ENCODE measurements at regions of chr11 and their contacts with region 1.

Region 1: DNA sequence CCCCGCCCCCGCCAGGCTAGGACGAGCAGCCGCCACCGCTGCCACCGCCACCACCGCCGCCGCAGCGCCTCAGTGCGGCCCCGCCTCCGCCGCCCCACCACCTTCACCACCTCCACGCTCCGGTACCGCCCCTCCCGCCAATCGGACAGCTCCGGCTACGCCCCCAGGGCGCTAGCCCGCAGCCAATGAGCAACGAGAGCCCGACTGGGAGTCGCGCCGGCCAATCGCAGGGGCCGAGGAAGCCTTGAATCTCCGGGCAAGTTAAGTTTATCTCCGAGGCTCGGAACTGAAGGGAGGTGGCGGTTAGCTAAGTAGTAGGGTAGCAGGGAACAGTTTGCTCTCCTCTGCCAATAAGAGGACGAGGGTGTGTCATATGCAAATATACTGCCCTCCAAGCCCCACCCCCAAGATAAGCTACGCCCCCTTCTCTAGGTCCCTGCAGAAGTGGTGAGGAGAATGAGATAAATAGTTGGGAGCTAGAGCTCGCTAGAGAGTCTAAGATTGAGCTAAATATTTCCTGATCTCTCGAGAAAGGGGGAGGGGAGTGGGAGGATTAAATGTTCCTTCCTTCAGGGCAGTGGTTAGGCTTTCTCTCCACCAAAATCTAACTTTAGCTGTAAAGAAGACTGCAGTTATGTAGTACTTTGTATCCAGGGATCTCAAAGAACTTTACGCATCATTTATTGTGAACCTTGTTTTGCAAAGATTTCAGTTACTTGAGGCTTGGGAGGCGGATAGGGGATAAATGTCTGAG is at the start of gene SESN3:
- DNase-seq: peak; percentile 99
- H3K4me3 Mint-ChIP-seq: no peak within 1 kb of the TSS
- H3K27ac Mint-ChIP-seq: peak within 1 kb of the TSS; percentile 83
- H3K4me1 Mint-ChIP-seq: peaks cover 52% of the 10 kb centered on the region
- H3K27me3 Mint-ChIP-seq: no peaks in the 10 kb centered on the region
- total RNA-seq, gene SESN3: 17.5 to 18.1 TPM

Region 2: DNA sequence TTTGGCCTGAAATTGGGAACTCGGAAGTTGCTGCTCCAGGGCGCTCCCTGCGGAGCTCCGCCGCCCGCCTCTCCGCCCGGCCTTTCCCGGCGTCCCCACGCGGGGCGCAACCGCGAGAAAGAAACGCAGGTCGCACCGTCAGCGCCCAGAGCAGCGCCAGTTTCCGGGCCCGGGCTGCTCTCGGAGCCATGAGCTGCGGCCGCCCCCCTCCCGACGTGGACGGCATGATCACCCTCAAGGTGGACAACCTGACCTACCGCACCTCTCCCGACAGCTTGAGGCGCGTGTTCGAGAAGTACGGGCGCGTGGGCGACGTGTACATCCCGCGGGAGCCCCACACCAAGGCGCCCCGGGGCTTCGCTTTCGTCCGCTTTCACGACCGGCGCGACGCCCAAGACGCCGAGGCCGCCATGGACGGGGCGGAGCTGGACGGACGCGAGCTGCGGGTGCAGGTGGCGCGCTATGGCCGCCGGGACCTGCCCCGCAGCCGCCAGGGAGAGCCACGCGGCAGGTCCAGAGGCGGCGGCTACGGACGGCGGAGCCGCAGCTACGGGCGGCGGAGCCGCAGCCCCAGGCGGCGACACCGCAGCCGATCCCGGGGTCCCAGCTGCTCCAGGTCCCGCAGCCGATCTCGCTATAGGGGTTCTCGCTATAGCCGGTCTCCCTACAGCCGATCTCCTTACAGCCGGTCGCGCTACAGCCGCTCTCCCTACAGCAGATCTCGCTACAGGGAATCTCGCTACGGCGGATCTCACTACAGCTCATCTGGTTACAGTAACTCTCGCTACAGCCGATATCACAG is 164.1 kb before region 1 on chr11:
- CTCF ChIA-PET with region 1: interaction called, 3 read pairs
- intact Hi-C with region 1: loop called (anchors 1 kb)
- DNase-seq: peak; percentile 82
- H3K4me3 Mint-ChIP-seq: peak overlapping the region; percentile 91
- H3K27ac Mint-ChIP-seq: peak overlapping the region; percentile 96
- H3K4me1 Mint-ChIP-seq: peaks cover 23% of the 10 kb centered on the region
- H3K27me3 Mint-ChIP-seq: no peaks in the 10 kb centered on the region

Region 3: GRCh38 chr11:95200781-95201457 is 30.4 kb before region 1 on chr11:
- CTCF ChIA-PET with region 1: interaction called, 3 read pairs
- intact Hi-C with region 1: loop called (anchors 1 kb)
- DNase-seq: no peak
- H3K4me3 Mint-ChIP-seq: no peak overlapping the region
- H3K27ac Mint-ChIP-seq: no peak overlapping the region
- H3K4me1 Mint-ChIP-seq: peaks cover 69% of the 10 kb centered on the region
- H3K27me3 Mint-ChIP-seq: no peaks in the 10 kb centered on the region

Region 4: DNA sequence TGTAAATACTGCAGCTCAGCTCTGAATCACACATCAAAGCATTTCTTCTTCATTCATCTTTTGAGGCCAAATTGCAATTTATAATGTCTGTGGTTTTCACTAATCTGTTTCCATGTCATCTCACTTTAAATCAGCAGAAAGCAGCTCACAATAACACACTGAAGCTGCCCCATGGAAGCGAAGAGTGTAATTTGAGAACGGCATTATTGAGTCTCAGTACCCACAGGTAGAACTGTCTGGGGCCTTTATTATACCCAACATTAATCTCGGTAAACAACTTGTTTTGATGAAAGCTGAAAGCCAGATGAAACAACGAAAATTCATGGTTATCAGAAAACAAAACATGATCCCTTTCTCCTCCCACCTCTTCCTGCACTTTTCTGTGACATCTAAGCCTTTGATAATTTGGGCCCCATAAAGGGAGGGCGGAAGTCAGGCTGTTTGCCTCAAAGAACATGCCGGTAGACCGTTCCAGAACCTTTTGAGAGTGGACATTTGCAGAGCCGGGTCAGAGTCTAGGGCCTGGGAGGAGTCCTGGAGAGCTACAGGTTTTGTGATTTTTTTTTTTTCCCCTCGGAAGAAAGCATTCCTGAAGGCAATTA is 67.9 kb after region 1 on chr11:
- CTCF ChIA-PET with region 1: interaction called, 3 read pairs
- intact Hi-C with region 1: loop called (anchors 1 kb)
- DNase-seq: peak; percentile 24
- H3K4me3 Mint-ChIP-seq: no peak overlapping the region
- H3K27ac Mint-ChIP-seq: peak overlapping the region; percentile 37
- H3K4me1 Mint-ChIP-seq: peaks cover 31% of the 10 kb centered on the region
- H3K27me3 Mint-ChIP-seq: no peaks in the 10 kb centered on the region

Region 5: DNA sequence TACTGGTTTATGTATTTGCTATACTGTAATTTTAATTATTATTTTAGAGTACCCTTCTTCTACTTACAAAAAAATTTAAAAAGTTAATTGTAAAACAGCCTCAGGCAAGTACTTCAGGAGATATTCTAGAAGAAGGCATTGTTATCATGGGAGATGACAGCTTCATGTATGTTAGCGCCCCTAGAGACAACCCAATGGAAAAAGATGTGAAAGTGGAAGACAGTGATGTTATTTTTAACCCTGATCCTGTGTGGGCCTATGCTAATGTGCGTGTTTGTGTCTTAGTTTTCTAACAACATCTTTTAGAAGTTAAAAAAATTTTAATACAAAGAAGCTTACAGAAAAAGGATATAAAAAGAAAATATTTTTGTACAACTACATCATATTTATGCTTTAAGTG is 353.3 kb after region 1 on chr11:
- CTCF ChIA-PET with region 1: no interaction called
- intact Hi-C with region 1: loop called (anchors 5 kb)
- DNase-seq: no peak
- H3K4me3 Mint-ChIP-seq: no peak overlapping the region
- H3K27ac Mint-ChIP-seq: no peak overlapping the region
- H3K4me1 Mint-ChIP-seq: peaks cover 18% of the 10 kb centered on the region
- H3K27me3 Mint-ChIP-seq: no peaks in the 10 kb centered on the region

Region 6: DNA sequence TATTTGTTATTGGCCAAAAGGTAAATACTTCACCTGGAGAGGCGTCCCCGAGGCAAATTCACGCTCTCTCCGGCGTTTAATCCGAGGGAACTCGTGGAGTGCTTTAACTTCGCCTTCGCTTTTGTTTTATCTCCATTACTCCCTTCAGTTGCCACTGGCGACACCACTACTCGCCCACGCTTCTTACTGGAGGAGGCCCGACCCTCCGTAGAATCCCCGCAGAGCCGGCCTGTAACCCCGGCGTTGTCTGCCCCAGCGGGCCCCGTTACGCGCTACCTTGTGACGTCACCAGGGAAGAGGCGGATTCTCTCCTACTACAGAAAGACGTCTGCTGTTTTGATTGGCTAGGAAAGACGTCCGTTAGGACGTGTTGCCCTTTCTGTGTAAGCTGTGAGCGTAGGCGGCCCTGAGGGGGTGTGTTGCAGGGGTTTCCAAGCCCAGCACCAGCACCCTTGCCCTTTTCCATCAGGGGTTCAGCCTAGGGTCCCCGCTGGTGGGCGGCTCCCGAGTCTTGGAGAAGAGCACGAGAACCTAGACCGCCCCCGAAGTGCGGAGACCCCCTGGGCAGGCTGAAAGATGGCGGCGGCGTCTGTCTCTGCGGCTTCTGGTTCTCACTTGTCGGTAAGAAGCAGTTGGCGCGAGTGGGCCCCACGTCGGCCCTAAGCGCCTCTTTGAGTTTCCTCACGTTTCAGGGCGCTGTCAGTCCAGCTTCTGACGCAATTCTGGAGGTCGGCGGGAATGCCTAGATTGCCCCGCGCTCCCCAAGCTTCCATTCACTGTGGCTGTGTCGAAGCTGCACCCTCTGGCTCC is 559.0 kb after region 1 on chr11 and contains the start of gene CEP57:
- CTCF ChIA-PET with region 1: no interaction called
- intact Hi-C with region 1: loop called (anchors 1 kb)
- DNase-seq: peak; percentile 98
- H3K4me3 Mint-ChIP-seq: peak within 1 kb of the TSS; percentile 99
- H3K27ac Mint-ChIP-seq: peak within 1 kb of the TSS; percentile 100
- H3K4me1 Mint-ChIP-seq: peaks cover 56% of the 10 kb centered on the region
- H3K27me3 Mint-ChIP-seq: no peaks in the 10 kb centered on the region
- total RNA-seq, gene CEP57: 110 to 115 TPM

Measured in activated naive CD4-positive, alpha-beta T cell treated with anti-CD3 and anti-CD28 coated beads for 36 hours (primary cell).